CD4-positive, alpha-beta memory T cell (primary cell): ENCODE measurements at regions of chr17 and their contacts with region 1.

Region 1: GRCh38 chr17:35022536-35023063 is 40.9 kb downstream of the RFFL start:
- DNase-seq: peak; percentile 59 to 84 (median 62)
- H3K4me3 ChIP-seq: no peak overlapping the region
- H3K4me3 Mint-ChIP-seq: peak overlapping the region; percentile 57 to 76 (median 66)
- H3K27ac ChIP-seq: peak overlapping the region; percentile 66
- H3K27ac Mint-ChIP-seq: peak overlapping the region; percentile 92 to 98 (median 96)
- H3K4me1 ChIP-seq: peaks cover 42% of the 10 kb centered on the region
- H3K4me1 Mint-ChIP-seq: peaks cover 45 to 70% (median 58%) of the 10 kb centered on the region in 4 donors
- H3K27me3 ChIP-seq: no peaks in the 10 kb centered on the region
- H3K27me3 Mint-ChIP-seq: no peaks in the 10 kb centered on the region

Region 2: GRCh38 chr17:34692920-34693319 is 329.7 kb before region 1 on chr17:
- CTCF ChIA-PET with region 1: no interaction called
- POLR2A ChIA-PET with region 1: no interaction called
- intact Hi-C with region 1: no loop called
- DNase-seq: no peak
- H3K4me3 ChIP-seq: no peak overlapping the region
- H3K4me3 Mint-ChIP-seq: no peak overlapping the region
- H3K27ac ChIP-seq: no peak overlapping the region
- H3K27ac Mint-ChIP-seq: no peak overlapping the region
- H3K4me1 ChIP-seq: no peaks in the 10 kb centered on the region
- H3K4me1 Mint-ChIP-seq: no peaks in the 10 kb centered on the region
- H3K27me3 ChIP-seq: no peaks in the 10 kb centered on the region
- H3K27me3 Mint-ChIP-seq: peaks cover 19 to 26% of the 10 kb centered on the region in 2 donors

Region 3: GRCh38 chr17:34998205-34998604 is 24.4 kb before region 1 on chr17:
- CTCF ChIA-PET with region 1: interaction called, 23 read pairs
- POLR2A ChIA-PET with region 1: interaction called, 12 read pairs
- intact Hi-C with region 1: no loop called
- DNase-seq: peak; percentile 75 to 79 (median 77)
- H3K4me3 ChIP-seq: no peak overlapping the region
- H3K4me3 Mint-ChIP-seq: no peak overlapping the region
- H3K27ac ChIP-seq: no peak overlapping the region
- H3K27ac Mint-ChIP-seq: peak overlapping the region in 6 of 7 donors; percentile 20 to 88 (median 80)
- H3K4me1 ChIP-seq: peaks cover 7% of the 10 kb centered on the region
- H3K4me1 Mint-ChIP-seq: peaks cover 4 to 12% (median 5%) of the 10 kb centered on the region in 4 donors
- H3K27me3 ChIP-seq: no peaks in the 10 kb centered on the region
- H3K27me3 Mint-ChIP-seq: no peaks in the 10 kb centered on the region

Region 4: DNA sequence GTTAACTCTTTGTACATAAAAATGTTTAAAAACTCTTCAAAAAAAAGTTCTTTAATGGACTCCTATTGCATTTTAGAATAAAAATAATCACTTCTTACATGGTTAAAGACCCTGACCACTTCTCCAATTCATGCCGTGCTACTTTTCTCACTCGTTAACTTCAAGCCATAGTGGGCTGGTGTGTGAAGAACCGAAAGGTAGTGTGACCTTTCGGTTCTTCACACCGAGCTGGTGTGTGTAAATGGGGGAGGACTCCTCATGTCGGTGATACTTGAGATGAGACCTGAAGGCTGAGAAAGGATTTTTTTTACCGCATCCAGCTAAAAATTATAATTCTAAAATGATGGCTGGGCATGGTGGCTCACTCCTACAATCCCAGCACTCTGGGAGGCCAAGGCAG is 18.8 kb after region 1 on chr17:
- CTCF ChIA-PET with region 1: interaction called, 20 read pairs
- POLR2A ChIA-PET with region 1: interaction called, 107 read pairs
- intact Hi-C with region 1: loop called (anchors 1 kb)
- DNase-seq: no peak
- H3K4me3 ChIP-seq: no peak overlapping the region
- H3K4me3 Mint-ChIP-seq: peak overlapping the region in 1 of 8 donors; percentile 36
- H3K27ac ChIP-seq: no peak overlapping the region
- H3K27ac Mint-ChIP-seq: peak overlapping the region in 4 of 7 donors; percentile 17 to 81 (median 47)
- H3K4me1 ChIP-seq: peaks cover 45% of the 10 kb centered on the region
- H3K4me1 Mint-ChIP-seq: peaks cover 38 to 71% (median 54%) of the 10 kb centered on the region in 4 donors
- H3K27me3 ChIP-seq: no peaks in the 10 kb centered on the region
- H3K27me3 Mint-ChIP-seq: no peaks in the 10 kb centered on the region

Region 5: GRCh38 chr17:35057332-35057915 is 34.8 kb after region 1 on chr17:
- CTCF ChIA-PET with region 1: interaction called, 79 read pairs
- POLR2A ChIA-PET with region 1: interaction called, 63 read pairs
- intact Hi-C with region 1: no loop called
- DNase-seq: no peak
- H3K4me3 ChIP-seq: no peak overlapping the region
- H3K4me3 Mint-ChIP-seq: peak overlapping the region in 3 of 8 donors; percentile 8 to 32 (median 26)
- H3K27ac ChIP-seq: no peak overlapping the region
- H3K27ac Mint-ChIP-seq: peak overlapping the region; percentile 4 to 91 (median 43)
- H3K4me1 ChIP-seq: peaks cover 76% of the 10 kb centered on the region
- H3K4me1 Mint-ChIP-seq: peaks cover 58 to 85% (median 66%) of the 10 kb centered on the region in 4 donors
- H3K27me3 ChIP-seq: no peaks in the 10 kb centered on the region
- H3K27me3 Mint-ChIP-seq: no peaks in the 10 kb centered on the region

Region 6: GRCh38 chr17:35088881-35089585 is 66.4 kb after region 1 on chr17:
- CTCF ChIA-PET with region 1: interaction called, 27 read pairs
- POLR2A ChIA-PET with region 1: interaction called, 32 read pairs
- intact Hi-C with region 1: loop called (anchors 1 kb)
- DNase-seq: peak; percentile 86 to 95 (median 88)
- H3K4me3 ChIP-seq: peak overlapping the region; percentile 76 to 96
- H3K4me3 Mint-ChIP-seq: peak overlapping the region; percentile 93 to 99 (median 96)
- H3K27ac ChIP-seq: peak overlapping the region; percentile 97
- H3K27ac Mint-ChIP-seq: peak overlapping the region; percentile 92 to 99 (median 97)
- H3K4me1 ChIP-seq: peaks cover 42% of the 10 kb centered on the region
- H3K4me1 Mint-ChIP-seq: peaks cover 28 to 55% (median 40%) of the 10 kb centered on the region in 4 donors
- H3K27me3 ChIP-seq: no peaks in the 10 kb centered on the region
- H3K27me3 Mint-ChIP-seq: no peaks in the 10 kb centered on the region